ENCODE measurements at regions of chr5 and their contacts with region 1.

Region 1: DNA sequence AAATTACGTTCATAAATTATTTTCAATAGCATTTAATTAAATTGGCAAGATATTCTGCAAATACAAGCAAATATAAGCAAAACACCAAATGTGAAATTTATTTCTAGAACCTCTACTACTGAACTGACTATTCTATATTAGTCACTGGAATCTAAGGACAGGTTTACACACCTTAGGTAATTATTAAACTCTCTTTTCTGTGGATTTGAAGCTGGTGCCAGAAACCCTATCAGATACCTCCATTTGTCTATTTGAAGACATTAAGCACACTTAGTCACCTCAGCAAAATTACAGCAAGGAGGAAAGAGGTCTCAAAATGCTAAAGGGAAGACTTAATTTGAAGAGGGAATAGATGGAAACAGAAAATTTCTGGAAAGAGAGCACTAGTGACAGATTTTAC is 83.4 kb downstream of the CPLANE1 start:
- DNase-seq: no peak
- ATAC-seq: no peak
- H3K4me3 ChIP-seq: no peak overlapping the region
- H3K4me3 Mint-ChIP-seq: no peak overlapping the region
- H3K27ac ChIP-seq: no peak overlapping the region
- H3K27ac Mint-ChIP-seq: no peak overlapping the region
- H3K4me1 ChIP-seq: no peaks in the 10 kb centered on the region
- H3K4me1 Mint-ChIP-seq: no peaks in the 10 kb centered on the region
- H3K27me3 ChIP-seq: no peaks in the 10 kb centered on the region
- H3K27me3 Mint-ChIP-seq: no peaks in the 10 kb centered on the region

Region 2: GRCh38 chr5:37153661-37154060 is 12.1 kb before region 1 on chr5:
- CTCF ChIA-PET with region 1: no interaction called
- POLR2A ChIA-PET with region 1: interaction called in 1 of 2 experiments, 16 read pairs
- DNase-seq: no peak
- ATAC-seq: no peak
- H3K4me3 ChIP-seq: no peak overlapping the region
- H3K4me3 Mint-ChIP-seq: no peak overlapping the region
- H3K27ac ChIP-seq: no peak overlapping the region
- H3K27ac Mint-ChIP-seq: no peak overlapping the region
- H3K4me1 ChIP-seq: no peaks in the 10 kb centered on the region
- H3K4me1 Mint-ChIP-seq: peaks cover 0 to 2% (median 0%) of the 10 kb centered on the region in 3 donors
- H3K27me3 ChIP-seq: no peaks in the 10 kb centered on the region
- H3K27me3 Mint-ChIP-seq: no peaks in the 10 kb centered on the region

Measured in T-cell (primary cell).